ENCODE measurements at regions of chr17 and their contacts with region 1.

Region 1: GRCh38 chr17:14033166-14033565 is 36.1 kb upstream of the COX10 start:
- DNase-seq: no peak
- H3K4me3 ChIP-seq: no peak overlapping the region
- H3K27me3 ChIP-seq: no peaks in the 10 kb centered on the region
- CTCF ChIP-seq: no peak

Region 2: DNA sequence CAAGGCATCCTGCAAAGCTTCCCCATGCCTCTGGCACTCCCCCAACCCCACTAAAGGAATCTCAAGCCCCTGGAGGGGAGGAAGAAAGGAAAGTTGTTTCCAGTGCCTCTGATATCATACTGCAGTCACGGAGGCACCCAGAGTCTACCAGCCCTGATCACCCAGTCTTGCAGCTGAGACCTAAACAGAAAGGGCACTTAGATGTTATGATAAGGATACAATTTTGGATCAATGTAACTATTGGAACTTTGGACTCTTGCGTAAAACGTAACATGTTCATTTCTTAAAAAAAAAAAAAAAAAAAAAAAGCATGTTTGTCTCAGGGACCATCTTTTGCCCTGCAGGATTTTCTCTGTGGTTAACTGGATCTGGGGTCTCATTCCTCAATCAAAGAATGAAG is 16.3 kb before region 1 on chr17:
- CTCF ChIA-PET with region 1: no interaction called
- POLR2A ChIA-PET with region 1: interaction called, 19 read pairs
- DNase-seq: no peak
- H3K4me3 ChIP-seq: no peak overlapping the region
- H3K27me3 ChIP-seq: no peaks in the 10 kb centered on the region
- CTCF ChIP-seq: no peak

Measured in BJ (cell line).